ENCODE measurements at regions of chr14 and their contacts with region 1.

Region 1: GRCh38 chr14:102774391-102775153 is 2.7 kb upstream of the TRAF3 start:
- DNase-seq: peak; percentile 72
- H3K4me3 ChIP-seq: no peak overlapping the region
- H3K27ac ChIP-seq: peak overlapping the region in 7 of 8 donors; percentile 36 to 95 (median 84)
- H3K4me1 ChIP-seq: peaks cover 18 to 54% (median 38%) of the 10 kb centered on the region in 6 donors
- H3K27me3 ChIP-seq: no peaks in the 10 kb centered on the region
- CTCF ChIP-seq: peak; percentile 44 to 82 (median 73)
- POLR2A ChIP-seq: no peak

Region 2: DNA sequence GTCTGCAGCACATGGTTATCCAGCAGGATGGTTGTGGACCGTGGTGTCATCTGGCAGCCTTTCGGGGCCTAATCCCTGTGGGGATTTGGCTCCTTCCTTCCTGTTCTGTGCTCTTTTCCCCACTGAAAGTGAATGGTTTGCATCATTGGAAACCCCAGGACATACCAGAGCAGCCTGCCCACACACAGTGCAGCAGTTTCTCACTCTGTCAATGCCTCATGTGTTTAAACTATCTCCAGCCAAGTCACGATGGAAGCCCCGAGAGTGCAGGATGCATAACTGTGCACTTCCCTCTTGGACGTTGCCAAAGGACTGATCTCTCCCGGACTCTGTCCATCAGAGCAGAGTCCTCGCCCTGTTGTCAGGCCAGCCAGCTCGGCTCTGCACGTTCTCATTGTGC is 118.9 kb after region 1 on chr14:
- intact Hi-C with region 1: loop called (anchors 10 kb)
- DNase-seq: no peak
- H3K4me3 ChIP-seq: no peak overlapping the region
- H3K27ac ChIP-seq: peak overlapping the region in 2 of 8 donors; percentile 6 to 7
- H3K4me1 ChIP-seq: peaks cover 0 to 14% (median 5%) of the 10 kb centered on the region in 6 donors
- H3K27me3 ChIP-seq: no peaks in the 10 kb centered on the region
- CTCF ChIP-seq: no peak
- POLR2A ChIP-seq: no peak